ENCODE measurements at regions of chr5 and their contacts with region 1.

Region 1: GRCh38 chr5:54719384-54720283 is 202.1 kb downstream of the SNX18 start:
- DNase-seq: peak; percentile 74
- ATAC-seq: peak; percentile 90

Region 2: DNA sequence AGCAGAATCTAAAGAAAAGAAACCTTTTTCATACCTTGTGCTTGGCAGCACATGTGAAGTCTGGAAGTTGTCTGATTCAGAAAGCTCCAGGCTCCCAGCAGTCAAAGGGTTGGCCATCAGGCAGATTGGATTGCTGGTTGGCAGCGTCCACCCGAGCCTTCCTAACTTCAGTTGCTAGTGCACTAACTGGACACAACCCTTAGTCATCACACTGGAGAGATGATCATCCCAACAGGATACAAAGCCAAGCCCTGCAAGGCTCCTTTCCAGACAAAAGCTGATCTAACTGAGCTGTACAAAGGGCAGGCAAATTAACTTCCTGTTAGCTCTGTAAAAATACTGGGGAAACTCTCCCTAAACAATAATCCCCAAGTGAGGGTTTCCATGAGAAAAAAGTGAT is 16.5 kb before region 1 on chr5:
- intact Hi-C with region 1: loop called (anchors 1 kb)
- DNase-seq: no peak
- ATAC-seq: peak; percentile 74

Region 3: DNA sequence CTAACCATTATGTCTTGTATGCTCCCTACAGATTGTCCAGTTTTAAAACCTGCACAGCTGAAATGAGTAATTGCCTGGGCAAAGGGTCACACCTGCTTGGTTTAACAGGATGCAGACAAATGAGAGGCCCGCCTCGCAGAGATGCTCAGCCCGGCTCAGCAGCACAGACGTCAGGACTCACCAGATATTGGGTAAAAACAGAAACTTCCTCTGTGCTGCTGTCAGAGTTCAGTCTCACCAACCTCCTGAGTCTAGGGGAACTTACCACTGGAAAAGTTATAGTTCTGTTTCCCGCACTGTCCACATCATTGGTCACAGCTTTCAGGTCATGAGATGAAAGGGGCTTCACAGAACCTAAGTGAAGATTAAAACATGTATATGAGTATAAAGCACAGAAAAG is 113.2 kb after region 1 on chr5:
- intact Hi-C with region 1: loop called (anchors 5 kb)
- DNase-seq: no peak
- ATAC-seq: no peak